GM12878 (cell line): ENCODE measurements at regions of chr6 and their contacts with region 1.

Region 1: DNA sequence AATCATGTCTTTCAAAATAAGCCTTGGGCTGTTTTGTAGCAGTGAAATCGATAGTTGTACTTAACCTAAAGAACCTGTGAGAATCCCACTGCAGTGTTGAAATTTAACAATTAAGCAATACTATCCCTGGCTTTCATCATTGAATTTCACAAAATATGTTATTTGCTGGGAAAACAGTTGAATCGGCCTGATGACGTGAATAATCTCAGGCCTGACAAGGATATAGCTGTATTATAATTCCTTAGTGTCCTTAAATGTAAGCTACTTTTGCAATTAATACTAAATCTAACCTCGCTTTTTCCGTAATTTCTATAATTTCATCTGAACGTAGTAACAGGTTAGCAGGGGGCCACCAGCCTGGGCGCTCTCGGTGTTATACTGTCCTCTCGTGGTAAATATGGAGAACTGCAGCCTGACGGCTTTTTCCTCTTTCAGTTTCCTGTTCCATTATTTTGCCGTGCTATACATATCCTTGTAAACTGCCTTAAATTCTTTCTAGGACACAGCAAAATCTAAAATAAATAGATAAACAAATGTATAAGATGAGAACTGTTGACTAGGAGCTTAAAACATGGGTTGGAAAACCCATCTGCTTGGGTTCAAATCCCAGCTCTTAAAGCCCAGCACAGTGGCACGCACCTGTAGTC is 24.0 kb downstream of the MTFR2 start:
- DNase-seq: no peak
- ATAC-seq: peak; percentile 88
- H3K4me3 ChIP-seq: no peak overlapping the region
- H3K27ac ChIP-seq: no peak overlapping the region
- H3K4me1 ChIP-seq: peaks cover 9% of the 10 kb centered on the region; the same call in 1 of the 2 replicates
- H3K27me3 ChIP-seq: no peaks in the 10 kb centered on the region
- CTCF ChIP-seq: peak; percentile 95 to 100 (median 100)
- EP300 ChIP-seq: no peak
- POLR2A ChIP-seq: no peak
- RAD21 ChIP-seq: peak; percentile 99

Region 2: DNA sequence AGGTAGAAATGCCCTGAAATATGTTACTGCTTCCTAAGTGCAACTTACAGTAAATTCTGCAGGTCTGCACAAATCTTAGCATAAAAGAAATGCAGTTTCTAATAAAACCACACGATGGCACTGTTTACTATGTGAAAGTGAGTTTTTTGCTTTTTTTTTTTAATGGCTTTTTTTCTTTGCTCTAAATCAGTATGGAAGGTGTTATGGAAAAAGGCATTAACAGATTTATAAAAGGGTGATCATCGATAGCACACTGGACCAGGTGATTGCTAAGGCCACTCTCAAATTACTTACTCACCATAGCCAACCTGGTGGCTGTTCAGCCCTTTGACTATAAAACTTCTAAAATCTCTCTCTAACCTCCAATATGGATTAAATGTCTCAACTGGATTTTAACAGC is 774.5 kb before region 1 on chr6:
- CTCF ChIA-PET with region 1: interaction called, 20 read pairs
- POLR2A ChIA-PET with region 1: no interaction called
- RAD21 ChIA-PET with region 1: interaction called, 9 read pairs
- SMC1A ChIA-PET with region 1: interaction called, 8 read pairs
- in situ Hi-C with region 1: loop called (anchors 5 kb)
- intact Hi-C with region 1: loop called (anchors 1 kb)
- DNase-seq: no peak
- ATAC-seq: peak; percentile 34; the same call in 2 of the 3 replicates
- H3K4me3 ChIP-seq: no peak overlapping the region
- H3K27ac ChIP-seq: no peak overlapping the region
- H3K4me1 ChIP-seq: no peaks in the 10 kb centered on the region; the same call in 1 of the 2 replicates
- H3K27me3 ChIP-seq: no peaks in the 10 kb centered on the region
- CTCF ChIP-seq: peak; percentile 49 to 67 (median 58)
- EP300 ChIP-seq: no peak
- POLR2A ChIP-seq: no peak
- RAD21 ChIP-seq: peak; percentile 77

Region 3: DNA sequence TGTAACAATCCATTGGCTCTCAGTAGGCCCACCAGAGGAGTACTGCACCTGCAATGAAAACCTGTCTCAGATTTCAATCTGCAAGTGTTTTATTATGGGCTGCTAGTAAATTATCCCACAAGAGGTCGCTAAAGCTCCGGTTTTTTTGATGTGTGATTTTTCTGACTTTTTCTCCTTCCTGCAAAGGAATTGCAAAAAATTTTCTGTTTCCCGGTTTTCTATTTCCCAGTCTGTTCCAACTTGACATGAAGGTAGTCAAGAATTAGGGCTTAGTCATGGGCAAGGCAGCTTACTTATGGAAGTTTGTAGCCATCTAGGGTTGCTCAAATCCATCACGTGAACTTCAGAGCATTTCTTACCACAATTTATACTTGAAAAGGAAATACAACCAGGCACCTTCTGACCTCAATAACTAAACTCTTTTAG is 690.1 kb before region 1 on chr6:
- CTCF ChIA-PET with region 1: interaction called, 50 read pairs
- POLR2A ChIA-PET with region 1: no interaction called
- RAD21 ChIA-PET with region 1: interaction called, 18 read pairs
- SMC1A ChIA-PET with region 1: interaction called, 25 read pairs
- in situ Hi-C with region 1: loop called (anchors 10 kb)
- intact Hi-C with region 1: loop called (anchors 5 kb)
- DNase-seq: peak; percentile 4
- ATAC-seq: peak; percentile 60
- H3K4me3 ChIP-seq: no peak overlapping the region
- H3K27ac ChIP-seq: no peak overlapping the region
- H3K4me1 ChIP-seq: no peaks in the 10 kb centered on the region
- H3K27me3 ChIP-seq: no peaks in the 10 kb centered on the region; a peak in 1 of 4 replicates
- CTCF ChIP-seq: peak; percentile 51 to 69 (median 58); a peak in 5 of 6 replicates
- EP300 ChIP-seq: no peak
- POLR2A ChIP-seq: no peak
- RAD21 ChIP-seq: peak; percentile 87

Region 4: GRCh38 chr6:135909737-135910387 is 316.3 kb before region 1 on chr6:
- CTCF ChIA-PET with region 1: interaction called, 13 read pairs
- POLR2A ChIA-PET with region 1: no interaction called
- RAD21 ChIA-PET with region 1: interaction called, 8 read pairs
- SMC1A ChIA-PET with region 1: interaction called, 9 read pairs
- in situ Hi-C with region 1: no loop called
- intact Hi-C with region 1: loop called (anchors 2 kb)
- DNase-seq: peak; percentile 19
- ATAC-seq: peak; percentile 92
- H3K4me3 ChIP-seq: no peak overlapping the region
- H3K27ac ChIP-seq: no peak overlapping the region
- H3K4me1 ChIP-seq: no peaks in the 10 kb centered on the region
- H3K27me3 ChIP-seq: no peaks in the 10 kb centered on the region
- CTCF ChIP-seq: peak; percentile 68 to 73 (median 71); a peak in 5 of 6 replicates
- EP300 ChIP-seq: no peak
- POLR2A ChIP-seq: no peak
- RAD21 ChIP-seq: peak; percentile 88

Region 5: DNA sequence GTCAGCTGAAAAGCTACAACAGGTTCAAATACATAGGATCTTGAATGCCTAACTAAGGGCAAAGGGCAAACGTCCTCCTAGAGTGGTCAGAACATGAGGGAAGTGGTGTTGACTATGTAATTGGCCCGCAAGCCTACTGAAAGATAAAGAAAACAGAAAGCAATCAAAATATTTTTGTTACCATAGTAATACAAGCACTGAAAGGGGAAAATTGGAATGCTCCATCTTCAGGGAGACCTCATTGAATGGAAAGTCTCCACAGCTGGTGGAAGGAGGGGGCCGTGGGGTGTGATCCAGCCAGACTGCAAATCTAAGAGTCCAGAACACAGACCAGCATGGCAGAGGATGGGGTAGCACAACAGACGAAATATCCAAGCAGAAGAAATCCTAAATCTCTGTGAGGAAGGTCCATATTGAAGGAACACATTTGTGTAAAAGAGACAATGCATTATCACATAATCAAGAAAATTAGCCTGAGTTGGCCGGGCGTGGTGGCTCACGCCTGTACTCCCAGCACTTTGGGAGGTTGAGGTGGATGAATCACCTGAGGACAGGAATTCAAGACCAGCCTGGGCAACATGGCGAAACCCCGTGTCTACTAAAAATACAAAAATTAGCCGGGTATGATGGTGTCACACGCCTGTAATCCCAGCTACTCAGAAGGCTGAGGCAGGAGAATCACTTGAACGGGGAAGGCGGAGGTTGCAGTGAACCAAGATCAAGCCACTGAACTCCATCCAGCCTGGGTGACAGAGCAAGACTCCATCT is 15.6 kb before region 1 on chr6:
- CTCF ChIA-PET with region 1: interaction called, 17 read pairs
- POLR2A ChIA-PET with region 1: no interaction called
- RAD21 ChIA-PET with region 1: no interaction called
- SMC1A ChIA-PET with region 1: no interaction called
- in situ Hi-C with region 1: no loop called
- intact Hi-C with region 1: no loop called
- DNase-seq: no peak
- ATAC-seq: no peak
- H3K4me3 ChIP-seq: no peak overlapping the region
- H3K27ac ChIP-seq: no peak overlapping the region
- H3K4me1 ChIP-seq: no peaks in the 10 kb centered on the region
- H3K27me3 ChIP-seq: no peaks in the 10 kb centered on the region; a peak in 1 of 4 replicates
- CTCF ChIP-seq: no peak
- EP300 ChIP-seq: no peak
- POLR2A ChIP-seq: no peak
- RAD21 ChIP-seq: no peak

Region 6: GRCh38 chr6:136249811-136250685 is 23.9 kb after region 1 on chr6 and contains the start of gene MTFR2:
- CTCF ChIA-PET with region 1: interaction called, 5 read pairs
- POLR2A ChIA-PET with region 1: no interaction called
- RAD21 ChIA-PET with region 1: no interaction called
- SMC1A ChIA-PET with region 1: interaction called, 11 read pairs
- in situ Hi-C with region 1: no loop called
- intact Hi-C with region 1: no loop called
- DNase-seq: peak; percentile 99
- ATAC-seq: peak; percentile 94
- H3K4me3 ChIP-seq: peak within 1 kb of the TSS; percentile 80
- H3K27ac ChIP-seq: peak within 1 kb of the TSS; percentile 75
- H3K4me1 ChIP-seq: no peaks in the 10 kb centered on the region
- H3K27me3 ChIP-seq: no peaks in the 10 kb centered on the region
- CTCF ChIP-seq: no peak
- EP300 ChIP-seq: peak in 1 of 2 experiments; percentile 27; a peak in 1 of 4 replicates
- POLR2A ChIP-seq: peak; percentile 90
- RAD21 ChIP-seq: no peak
- polyA plus RNA-seq, gene MTFR2: 24.6 to 26.9 TPM